AG04450 (cell line): ENCODE measurements at regions of chr19 and their contacts with region 1.

Region 1: GRCh38 chr19:17695198-17695597 is 7.0 kb upstream of the UNC13A start:
- DNase-seq: no peak
- H3K4me3 ChIP-seq: no peak overlapping the region
- H3K27ac ChIP-seq: no peak overlapping the region
- H3K27me3 ChIP-seq: peaks cover 5% of the 10 kb centered on the region
- CTCF ChIP-seq: no peak

Region 2: GRCh38 chr19:17655751-17656480 is 39.3 kb before region 1 on chr19:
- CTCF ChIA-PET with region 1: no interaction called
- POLR2A ChIA-PET with region 1: interaction called, 10 read pairs
- DNase-seq: no peak
- H3K4me3 ChIP-seq: no peak overlapping the region
- H3K27ac ChIP-seq: no peak overlapping the region
- H3K27me3 ChIP-seq: peaks cover 3% of the 10 kb centered on the region
- CTCF ChIP-seq: no peak

Region 3: DNA sequence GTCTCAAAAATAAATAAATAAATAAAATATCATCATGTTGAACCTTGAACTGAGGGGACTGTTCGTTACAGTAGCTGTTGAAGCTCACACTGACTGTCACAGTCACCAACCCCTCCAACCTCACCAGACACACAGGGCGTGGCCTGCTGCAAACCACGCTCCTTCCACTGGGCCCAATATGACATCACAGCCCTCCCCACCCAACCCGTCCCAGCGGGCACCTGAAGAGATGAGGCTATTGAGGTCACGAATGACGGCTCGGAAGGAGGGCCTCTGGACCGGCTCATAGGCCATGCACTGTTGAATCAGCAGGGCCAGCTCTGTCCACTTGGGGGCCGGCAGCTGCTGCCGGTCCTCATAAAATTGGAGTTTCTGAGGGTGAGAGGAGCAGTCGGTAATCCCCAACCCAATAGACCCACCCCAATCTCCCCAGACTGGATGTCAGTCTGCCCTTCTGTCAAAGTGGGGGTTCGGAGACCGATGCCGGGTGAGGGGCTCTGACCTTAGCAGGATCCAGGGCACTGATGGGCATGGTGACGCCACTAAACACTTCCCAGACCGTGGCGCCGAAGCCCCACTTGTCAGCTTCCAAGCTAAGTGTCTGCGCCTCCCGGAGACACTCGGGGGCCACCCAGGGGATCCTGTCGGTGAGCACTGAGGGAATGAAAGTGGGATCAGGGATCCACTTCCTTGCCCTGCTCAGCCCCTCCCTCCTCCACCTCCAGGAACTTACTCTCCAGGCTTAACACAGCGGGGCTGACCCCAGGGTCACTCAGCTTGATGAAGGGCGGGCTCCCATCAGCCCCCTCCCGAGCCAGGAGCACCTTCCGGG is 139.4 kb after region 1 on chr19:
- CTCF ChIA-PET with region 1: no interaction called
- POLR2A ChIA-PET with region 1: no interaction called
- DNase-seq: no peak
- H3K4me3 ChIP-seq: no peak overlapping the region
- H3K27ac ChIP-seq: no peak overlapping the region
- H3K27me3 ChIP-seq: peaks cover 6% of the 10 kb centered on the region
- CTCF ChIP-seq: peak; percentile 22